CD4-positive, alpha-beta T cell (primary cell): ENCODE measurements at regions of chr5 and their contacts with region 1.

Region 1: DNA sequence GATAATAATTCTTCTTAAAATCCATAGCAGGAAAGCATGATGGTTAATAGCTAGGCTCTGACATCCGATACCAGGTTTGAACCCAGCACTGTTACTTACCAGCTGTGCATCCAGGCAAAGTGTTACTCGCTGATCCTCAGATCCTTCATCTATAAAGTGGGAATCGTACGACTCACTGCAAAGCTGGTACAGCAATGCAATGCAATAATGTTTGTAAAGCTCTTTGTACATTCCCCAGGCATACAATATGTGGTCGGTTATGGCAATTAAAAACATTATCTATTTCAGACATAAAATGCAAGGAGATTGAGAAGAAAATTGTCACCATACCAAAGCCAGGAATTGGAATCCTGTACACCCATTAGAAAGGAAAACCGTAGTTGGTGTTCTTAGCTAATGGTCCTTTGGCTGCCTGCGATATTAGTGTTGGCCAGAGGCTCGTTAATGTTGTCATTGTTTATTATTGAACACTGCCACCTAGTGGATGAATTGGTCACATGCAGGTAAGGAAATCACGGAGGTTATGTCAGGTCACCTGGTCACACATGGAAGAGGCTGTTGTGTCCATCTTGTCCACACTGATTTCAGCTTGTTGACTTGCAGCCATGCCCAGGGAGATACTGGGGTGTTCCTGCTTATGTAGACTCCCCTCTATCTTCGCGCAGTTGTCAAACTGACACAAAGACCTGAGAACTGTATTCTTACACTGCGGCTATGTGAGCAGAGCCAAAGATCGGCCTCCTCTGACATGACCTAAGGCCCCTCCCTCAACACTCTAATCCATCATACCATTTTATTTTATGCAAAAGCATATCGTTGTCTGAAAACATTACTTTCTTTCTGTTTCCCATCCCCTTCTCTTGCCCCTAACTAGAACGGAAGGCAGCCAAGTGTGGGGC is 87.5 kb upstream of the PPP2R2B start:
- DNase-seq: peak in 13 of 14 experiments; percentile 1 to 78 (median 28)
- ATAC-seq: peak; percentile 70
- H3K4me3 ChIP-seq: no peak overlapping the region
- H3K4me3 Mint-ChIP-seq: no peak overlapping the region
- H3K27ac ChIP-seq: no peak overlapping the region
- H3K27ac Mint-ChIP-seq: no peak overlapping the region
- H3K4me1 ChIP-seq: no peaks in the 10 kb centered on the region
- H3K4me1 Mint-ChIP-seq: no peaks in the 10 kb centered on the region
- H3K27me3 ChIP-seq: no peaks in the 10 kb centered on the region
- H3K27me3 Mint-ChIP-seq: no peaks in the 10 kb centered on the region
- CTCF ChIP-seq: peak; percentile 88

Region 2: GRCh38 chr5:146533260-146533857 is 432.7 kb before region 1 on chr5:
- CTCF ChIA-PET with region 1: interaction called, 5 read pairs
- POLR2A ChIA-PET with region 1: no interaction called
- intact Hi-C with region 1: loop called (anchors 1 to 2 kb)
- DNase-seq: peak; percentile 50 to 82 (median 68)
- ATAC-seq: peak; percentile 90
- H3K4me3 ChIP-seq: no peak overlapping the region
- H3K4me3 Mint-ChIP-seq: no peak overlapping the region
- H3K27ac ChIP-seq: no peak overlapping the region
- H3K27ac Mint-ChIP-seq: no peak overlapping the region
- H3K4me1 ChIP-seq: no peaks in the 10 kb centered on the region
- H3K4me1 Mint-ChIP-seq: peaks cover 5% of the 10 kb centered on the region
- H3K27me3 ChIP-seq: no peaks in the 10 kb centered on the region
- H3K27me3 Mint-ChIP-seq: no peaks in the 10 kb centered on the region
- CTCF ChIP-seq: peak; percentile 78

Region 3: DNA sequence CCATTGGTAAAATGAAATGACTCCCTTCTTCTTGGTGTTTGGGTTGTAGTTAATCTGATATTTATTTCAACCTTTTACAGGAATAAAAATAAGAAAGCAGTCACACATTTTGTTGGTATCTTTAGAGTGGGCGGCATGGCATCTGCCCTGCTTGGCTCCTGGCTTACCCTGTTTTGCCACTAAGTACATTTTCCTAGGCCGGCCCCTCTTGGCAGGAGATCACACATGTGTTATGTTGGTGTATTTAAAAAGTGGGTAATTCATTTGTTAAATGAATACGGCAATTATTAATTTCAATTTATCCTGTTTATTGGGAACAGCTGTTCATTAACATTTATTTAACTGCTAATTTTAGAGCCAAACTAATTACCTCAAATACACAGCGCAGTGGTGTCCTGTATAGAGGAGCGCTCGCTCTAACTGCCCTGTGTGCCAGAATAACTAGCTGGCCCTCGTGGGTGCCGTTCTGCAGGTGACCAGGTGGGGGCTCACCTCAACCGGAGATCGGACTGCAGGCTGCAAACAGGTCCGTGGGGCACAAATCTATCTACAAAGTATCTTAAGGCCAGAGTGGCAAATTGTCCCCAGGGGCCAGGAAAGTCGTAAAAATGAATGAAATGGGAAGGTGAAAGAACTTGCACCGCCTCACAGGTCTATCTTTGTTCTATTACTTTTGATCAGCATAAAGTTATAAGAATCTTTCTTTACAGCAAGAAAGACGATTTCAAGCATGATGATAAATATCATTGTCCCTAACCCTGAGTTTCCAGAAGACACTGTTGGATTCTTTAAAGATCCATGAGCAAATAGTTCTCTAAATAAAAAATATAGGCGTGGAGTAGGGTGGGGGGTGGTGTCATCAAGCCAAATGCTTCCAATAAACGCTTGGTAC is 423.8 kb before region 1 on chr5:
- CTCF ChIA-PET with region 1: interaction called, 11 read pairs
- POLR2A ChIA-PET with region 1: no interaction called
- intact Hi-C with region 1: loop called (anchors 1 kb)
- DNase-seq: peak; percentile 43 to 75 (median 56)
- ATAC-seq: peak; percentile 80
- H3K4me3 ChIP-seq: no peak overlapping the region
- H3K4me3 Mint-ChIP-seq: no peak overlapping the region
- H3K27ac ChIP-seq: no peak overlapping the region
- H3K27ac Mint-ChIP-seq: no peak overlapping the region
- H3K4me1 ChIP-seq: no peaks in the 10 kb centered on the region
- H3K4me1 Mint-ChIP-seq: no peaks in the 10 kb centered on the region
- H3K27me3 ChIP-seq: no peaks in the 10 kb centered on the region
- H3K27me3 Mint-ChIP-seq: no peaks in the 10 kb centered on the region
- CTCF ChIP-seq: peak; percentile 84

Region 4: GRCh38 chr5:146662229-146662628 is 303.8 kb before region 1 on chr5:
- CTCF ChIA-PET with region 1: interaction called, 6 read pairs
- POLR2A ChIA-PET with region 1: no interaction called
- intact Hi-C with region 1: loop called (anchors 1 kb)
- DNase-seq: peak in 5 of 14 experiments; percentile 2 to 64 (median 61)
- ATAC-seq: no peak
- H3K4me3 ChIP-seq: no peak overlapping the region
- H3K4me3 Mint-ChIP-seq: no peak overlapping the region
- H3K27ac ChIP-seq: no peak overlapping the region
- H3K27ac Mint-ChIP-seq: no peak overlapping the region
- H3K4me1 ChIP-seq: no peaks in the 10 kb centered on the region
- H3K4me1 Mint-ChIP-seq: peaks cover 20% of the 10 kb centered on the region
- H3K27me3 ChIP-seq: no peaks in the 10 kb centered on the region
- H3K27me3 Mint-ChIP-seq: no peaks in the 10 kb centered on the region
- CTCF ChIP-seq: peak; percentile 79

Region 5: DNA sequence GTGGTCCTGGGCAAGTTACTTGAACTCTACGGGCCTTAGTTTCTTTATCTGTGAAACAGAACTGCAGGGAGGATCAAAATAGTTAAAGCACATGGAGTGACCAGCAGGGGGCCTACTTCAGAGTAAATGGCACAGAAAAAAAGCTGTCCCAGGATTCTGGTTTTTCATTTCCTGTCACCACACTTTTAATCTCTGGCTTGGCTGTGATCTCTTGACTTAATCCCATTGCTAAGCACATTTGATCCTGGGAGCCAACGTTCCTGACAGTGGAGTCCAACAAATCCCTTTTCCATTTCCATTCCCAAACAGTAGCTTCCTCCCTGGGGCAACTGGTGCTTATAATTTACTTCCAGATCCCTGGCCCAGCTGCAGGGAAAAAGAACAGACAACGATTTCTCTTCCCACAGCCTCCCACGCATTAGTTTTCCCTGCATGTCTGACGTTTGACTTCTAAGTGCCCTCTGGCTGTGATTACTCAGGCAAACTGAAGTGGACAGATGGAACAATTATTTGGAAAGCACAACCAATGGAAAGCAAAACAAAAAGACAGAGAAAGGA is 132.3 kb after region 1 on chr5:
- CTCF ChIA-PET with region 1: no interaction called
- POLR2A ChIA-PET with region 1: no interaction called
- intact Hi-C with region 1: no loop called
- DNase-seq: peak in 3 of 14 experiments; percentile 12 to 19 (median 14)
- ATAC-seq: no peak
- H3K4me3 ChIP-seq: no peak overlapping the region
- H3K4me3 Mint-ChIP-seq: no peak overlapping the region
- H3K27ac ChIP-seq: no peak overlapping the region
- H3K27ac Mint-ChIP-seq: no peak overlapping the region
- H3K4me1 ChIP-seq: no peaks in the 10 kb centered on the region
- H3K4me1 Mint-ChIP-seq: no peaks in the 10 kb centered on the region
- H3K27me3 ChIP-seq: no peaks in the 10 kb centered on the region
- H3K27me3 Mint-ChIP-seq: no peaks in the 10 kb centered on the region
- CTCF ChIP-seq: no peak

Region 6: DNA sequence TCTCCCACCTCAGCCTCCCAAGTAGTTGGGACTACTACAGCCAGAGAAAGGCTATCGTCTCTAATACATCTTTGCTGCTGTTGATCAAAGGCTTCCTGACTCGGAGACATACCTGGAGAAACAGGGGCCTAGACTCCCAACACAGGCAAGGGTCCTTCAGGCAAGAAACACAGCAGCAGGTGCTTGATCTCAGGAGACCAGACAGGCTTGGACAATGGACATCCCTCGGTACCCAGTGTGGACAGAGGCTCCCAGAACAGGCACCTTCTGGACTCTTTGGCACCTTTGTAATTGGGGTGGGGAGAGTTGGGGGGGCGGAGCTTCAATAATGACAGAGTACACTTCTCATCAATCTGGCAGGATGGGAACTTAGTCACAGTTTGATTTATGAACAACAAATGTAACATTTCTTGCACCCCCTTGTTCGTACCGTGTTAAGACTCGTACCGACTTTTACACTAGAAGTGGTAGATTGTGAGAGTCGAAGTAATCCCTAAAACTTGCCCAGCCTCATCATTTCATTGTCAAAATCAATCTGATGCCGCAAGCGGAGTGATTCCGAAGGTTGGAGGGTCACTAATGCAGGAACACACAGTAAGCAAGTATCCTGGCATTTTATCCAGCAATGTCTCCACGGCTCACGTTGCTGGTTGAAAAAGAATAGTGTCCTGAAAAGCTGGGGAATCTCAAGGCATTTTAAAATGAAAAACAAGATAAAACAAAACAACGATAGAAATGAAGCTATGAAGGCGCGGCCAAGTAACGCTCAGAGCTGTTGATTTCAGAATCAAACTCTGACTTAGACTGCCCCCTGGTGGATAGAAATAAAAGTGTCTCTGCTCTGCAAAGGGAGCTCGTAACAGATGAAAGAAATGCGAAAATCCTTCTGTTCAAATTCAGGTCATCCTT is 222.4 kb after region 1 on chr5:
- CTCF ChIA-PET with region 1: no interaction called
- POLR2A ChIA-PET with region 1: no interaction called
- intact Hi-C with region 1: loop called (anchors 5 to 10 kb)
- DNase-seq: peak in 9 of 14 experiments; percentile 4 to 74 (median 26)
- ATAC-seq: peak; percentile 67
- H3K4me3 ChIP-seq: no peak overlapping the region
- H3K4me3 Mint-ChIP-seq: no peak overlapping the region
- H3K27ac ChIP-seq: no peak overlapping the region
- H3K27ac Mint-ChIP-seq: no peak overlapping the region
- H3K4me1 ChIP-seq: peaks cover 4% of the 10 kb centered on the region
- H3K4me1 Mint-ChIP-seq: peaks cover 7% of the 10 kb centered on the region
- H3K27me3 ChIP-seq: peaks cover 0 to 5% of the 10 kb centered on the region in 2 experiments
- H3K27me3 Mint-ChIP-seq: peaks cover 12% of the 10 kb centered on the region
- CTCF ChIP-seq: peak; percentile 90